ENCODE measurements at regions of chr1 and their contacts with region 1.

Region 1: GRCh38 chr1:168321945-168322344 is 41.3 kb downstream of the TBX19 start:
- DNase-seq: peak; percentile 18
- H3K4me3 Mint-ChIP-seq: no peak overlapping the region
- H3K27ac Mint-ChIP-seq: peak overlapping the region; percentile 12
- H3K4me1 Mint-ChIP-seq: peaks cover 31% of the 10 kb centered on the region
- H3K27me3 Mint-ChIP-seq: no peaks in the 10 kb centered on the region
- CTCF ChIP-seq: peak; percentile 37

Region 2: DNA sequence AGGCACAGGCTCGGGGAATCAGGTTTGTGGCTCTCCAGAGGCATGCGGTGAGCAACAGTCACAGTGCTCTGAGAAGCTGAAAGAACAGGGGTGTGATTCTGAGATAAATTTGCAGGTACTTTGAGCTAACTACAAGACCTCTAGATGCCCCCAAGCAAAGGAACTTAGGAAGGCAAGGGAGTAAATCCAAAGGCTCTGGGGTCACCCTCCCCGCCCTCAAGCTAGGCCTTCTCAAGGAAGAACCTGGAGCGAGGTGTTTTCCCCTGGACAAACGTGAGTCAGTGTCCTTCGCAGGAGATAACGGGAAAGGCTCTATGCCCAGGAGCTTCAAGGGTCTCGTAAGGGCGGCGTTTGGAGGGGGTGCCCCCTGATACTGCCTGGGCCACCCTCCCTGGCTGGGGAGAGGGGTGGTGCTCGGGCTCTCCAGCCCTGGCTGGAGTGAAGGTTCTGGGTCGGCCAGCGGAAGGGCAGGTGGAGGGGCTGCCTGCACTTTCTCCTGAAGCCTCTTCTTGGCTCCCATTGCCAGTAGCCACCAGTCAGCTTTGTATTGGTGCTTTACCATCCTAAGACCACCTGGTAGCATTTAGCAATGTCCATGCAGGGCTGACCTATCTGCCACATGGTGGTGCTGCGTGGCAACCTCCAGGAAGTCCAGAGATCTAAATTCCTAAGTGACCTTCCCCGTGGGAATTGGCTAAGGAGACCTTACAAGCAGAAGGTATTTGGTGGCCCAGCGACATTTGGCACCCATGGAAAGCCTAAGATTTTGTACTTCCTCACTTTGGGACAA is 229.2 kb before region 1 on chr1:
- CTCF ChIA-PET with region 1: no interaction called
- intact Hi-C with region 1: loop called (anchors 5 kb)
- DNase-seq: peak; percentile 37
- H3K4me3 Mint-ChIP-seq: no peak overlapping the region
- H3K27ac Mint-ChIP-seq: no peak overlapping the region
- H3K4me1 Mint-ChIP-seq: no peaks in the 10 kb centered on the region
- H3K27me3 Mint-ChIP-seq: no peaks in the 10 kb centered on the region
- CTCF ChIP-seq: peak; percentile 42

Region 3: GRCh38 chr1:168234846-168235547 is 86.9 kb before region 1 on chr1:
- CTCF ChIA-PET with region 1: interaction called, 77 read pairs
- intact Hi-C with region 1: loop called (anchors 1 kb)
- DNase-seq: peak; percentile 70
- H3K4me3 Mint-ChIP-seq: no peak overlapping the region
- H3K27ac Mint-ChIP-seq: no peak overlapping the region
- H3K4me1 Mint-ChIP-seq: peaks cover 38% of the 10 kb centered on the region
- H3K27me3 Mint-ChIP-seq: no peaks in the 10 kb centered on the region
- CTCF ChIP-seq: peak; percentile 60

Region 4: DNA sequence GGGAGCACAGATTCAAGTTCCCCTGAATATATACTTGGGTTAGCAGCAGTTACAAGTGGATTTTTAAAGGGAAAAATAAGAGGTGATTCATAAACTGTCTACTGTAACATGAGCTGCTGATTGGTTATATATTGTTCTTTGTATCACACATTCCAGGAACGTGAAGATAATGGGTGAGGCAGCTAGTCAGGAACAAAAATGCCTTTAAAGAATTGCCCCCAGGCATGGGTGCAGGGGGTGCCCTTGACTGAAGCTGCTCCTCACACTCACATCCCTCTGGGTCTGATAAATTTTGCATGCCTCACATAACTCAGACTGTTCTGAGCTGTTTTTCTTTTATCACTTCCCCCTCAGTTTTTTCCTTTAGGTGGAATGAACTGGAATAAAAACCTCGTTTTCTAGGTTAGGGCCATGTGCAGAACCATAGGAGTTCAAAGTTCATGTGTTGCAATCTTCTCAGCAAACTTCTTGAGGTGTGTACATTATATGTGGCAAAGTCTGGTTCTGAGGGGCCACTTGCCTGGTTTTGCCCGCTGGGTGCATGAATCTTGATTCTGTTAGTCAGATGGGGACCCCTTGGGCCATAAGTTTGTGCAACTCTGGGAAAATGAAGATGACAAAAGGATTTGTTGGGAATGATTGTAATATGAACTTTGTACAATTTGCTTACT is 20.1 kb before region 1 on chr1:
- CTCF ChIA-PET with region 1: interaction called, 11 read pairs
- intact Hi-C with region 1: no loop called
- DNase-seq: peak; percentile 91
- H3K4me3 Mint-ChIP-seq: no peak overlapping the region
- H3K27ac Mint-ChIP-seq: peak overlapping the region; percentile 95
- H3K4me1 Mint-ChIP-seq: peaks cover 55% of the 10 kb centered on the region
- H3K27me3 Mint-ChIP-seq: no peaks in the 10 kb centered on the region
- CTCF ChIP-seq: no peak

Region 5: DNA sequence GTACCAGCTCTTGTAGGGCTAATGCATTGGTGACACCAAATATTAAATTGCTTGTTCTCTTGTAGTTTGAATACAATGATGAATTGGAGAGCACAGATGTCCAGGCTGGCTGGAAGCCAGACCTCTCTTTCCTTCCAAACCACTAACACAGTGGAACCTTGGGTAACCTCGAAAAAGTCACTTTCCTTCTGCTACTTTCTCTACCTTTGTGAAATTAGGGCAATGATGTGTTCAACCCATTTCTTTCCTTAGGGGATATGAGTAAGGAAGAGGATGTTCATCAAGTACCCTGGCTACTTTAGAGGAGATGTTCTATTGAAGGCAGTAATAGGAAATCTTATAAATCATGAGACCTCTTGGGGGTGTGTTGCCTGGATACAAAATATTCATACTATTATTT is 166.2 kb after region 1 on chr1:
- CTCF ChIA-PET with region 1: no interaction called
- intact Hi-C with region 1: no loop called
- DNase-seq: peak; percentile 22
- H3K4me3 Mint-ChIP-seq: no peak overlapping the region
- H3K27ac Mint-ChIP-seq: no peak overlapping the region
- H3K4me1 Mint-ChIP-seq: peaks cover 15% of the 10 kb centered on the region
- H3K27me3 Mint-ChIP-seq: no peaks in the 10 kb centered on the region
- CTCF ChIP-seq: no peak

Region 6: DNA sequence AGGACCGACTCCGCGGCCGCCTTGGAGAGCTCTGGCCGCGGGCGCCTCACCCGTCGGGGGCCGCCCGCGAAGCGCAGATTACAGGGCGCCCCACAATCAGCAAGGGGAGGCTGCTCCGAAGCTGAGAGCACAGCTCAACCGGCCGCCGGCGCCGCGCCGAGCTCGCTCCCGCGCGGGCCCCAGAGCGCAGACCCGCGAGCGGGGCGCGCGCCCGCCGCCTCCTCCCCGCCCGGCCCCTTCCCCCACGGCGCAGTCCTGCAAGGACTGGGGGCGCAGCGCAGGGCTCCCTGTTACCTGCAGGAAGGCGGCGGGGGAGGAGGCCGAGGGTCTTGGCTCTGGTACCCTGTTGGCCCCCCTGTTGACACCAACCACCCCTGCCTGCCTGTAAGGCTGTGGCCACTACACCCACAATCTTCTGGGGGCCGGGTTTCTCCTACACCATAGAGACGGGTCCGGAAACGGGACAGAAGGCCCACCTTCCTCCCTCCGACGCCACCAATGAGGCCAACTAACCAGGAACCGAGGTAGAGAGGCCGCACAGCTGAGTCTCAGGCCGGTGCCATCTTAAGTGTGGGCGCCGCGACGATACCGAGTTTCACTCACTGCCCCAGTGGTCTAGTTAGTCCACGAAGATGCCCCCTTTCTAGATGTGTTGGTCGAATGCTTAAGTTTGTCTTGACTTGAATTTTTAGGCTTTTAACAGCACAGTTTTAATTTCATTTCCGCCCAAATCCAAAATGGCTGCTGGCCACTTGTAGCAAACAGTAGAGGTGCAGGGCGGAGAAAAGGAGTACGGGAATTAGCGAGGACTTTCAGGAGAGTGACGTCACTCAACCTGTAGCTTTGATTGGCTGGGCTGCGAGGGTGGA is 1571.8 kb after region 1 on chr1 and contains the start of gene SCYL3:
- CTCF ChIA-PET with region 1: interaction called, 16 read pairs
- intact Hi-C with region 1: no loop called
- DNase-seq: peak; percentile 93
- H3K4me3 Mint-ChIP-seq: peak within 1 kb of the TSS; percentile 86
- H3K27ac Mint-ChIP-seq: peak within 1 kb of the TSS; percentile 100
- H3K4me1 Mint-ChIP-seq: peaks cover 49% of the 10 kb centered on the region
- H3K27me3 Mint-ChIP-seq: no peaks in the 10 kb centered on the region
- CTCF ChIP-seq: no peak
- total RNA-seq, gene SCYL3: 17.9 and 18.3 TPM in 2 replicates